Gastrocnemius medialis (tissue), 4 donors: ENCODE measurements at regions of chr15 and their contacts with region 1.

Region 1: DNA sequence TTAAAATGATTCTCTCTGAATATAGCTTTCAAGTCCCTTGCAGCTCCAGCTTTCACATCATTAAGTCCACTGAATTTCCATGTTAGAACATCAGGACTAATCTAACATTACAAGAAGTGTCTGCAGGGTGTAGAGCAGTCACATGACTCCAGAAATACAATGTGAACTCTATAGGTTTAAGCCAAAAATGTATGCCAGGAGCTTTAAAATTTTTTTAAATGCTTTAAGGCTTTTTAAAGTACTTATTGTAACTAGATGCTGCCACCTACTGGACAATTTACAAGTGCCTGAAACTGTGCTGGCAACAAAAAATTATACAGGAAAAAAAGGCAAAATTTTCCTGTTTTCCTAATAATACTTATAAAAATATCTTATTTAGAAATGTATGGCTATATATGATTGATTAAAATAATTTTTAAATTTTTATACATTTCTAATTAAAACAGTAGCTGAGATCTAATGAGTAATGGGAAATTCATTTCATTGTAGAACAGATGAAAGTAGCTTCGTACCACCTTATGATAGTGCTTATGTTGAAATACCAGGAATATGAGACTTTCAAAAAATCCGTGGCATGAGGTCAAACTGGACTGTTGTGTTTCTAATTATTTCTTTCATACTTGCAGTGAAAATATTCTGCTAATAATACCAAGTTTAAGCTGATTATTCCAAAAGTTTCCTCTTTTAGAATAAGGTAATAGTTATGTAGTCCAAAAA is 25.7 kb downstream of the FSIP1 start:
- DNase-seq: no peak
- ATAC-seq: no peak
- H3K4me3 ChIP-seq: no peak overlapping the region
- H3K27ac ChIP-seq: no peak overlapping the region
- H3K4me1 ChIP-seq: no peaks in the 10 kb centered on the region
- H3K27me3 ChIP-seq: no peaks in the 10 kb centered on the region
- CTCF ChIP-seq: peak; percentile 52 to 86 (median 55)
- POLR2A ChIP-seq: no peak

Region 2: DNA sequence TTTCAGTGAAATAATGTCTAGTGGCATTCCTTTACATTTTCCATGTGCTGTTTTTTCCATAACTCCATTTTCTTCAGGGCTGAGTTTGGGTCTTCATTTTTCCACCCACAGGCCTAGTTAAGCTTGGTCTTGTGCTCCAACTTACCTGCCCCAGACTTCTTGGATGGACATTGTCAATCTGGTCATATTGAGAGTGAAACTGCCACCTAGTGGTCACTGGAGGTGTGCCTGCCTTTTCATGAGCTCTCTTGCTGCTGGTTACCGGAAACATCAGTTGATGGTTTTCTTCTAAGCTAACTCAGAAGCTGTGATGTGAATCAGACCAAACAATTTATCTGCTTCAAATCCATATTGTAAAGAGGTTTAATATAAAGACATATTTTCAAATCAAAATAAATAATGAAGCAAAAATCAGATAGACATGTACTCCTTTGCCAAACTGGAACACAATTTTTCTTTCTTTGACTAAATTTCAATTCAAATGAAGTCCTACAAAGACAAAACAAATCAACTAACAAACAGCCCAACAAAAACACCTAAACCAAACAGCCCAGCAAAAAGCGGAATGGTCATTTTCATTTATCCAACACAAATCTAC is 1057.2 kb before region 1 on chr15:
- in situ Hi-C with region 1: loop called in 2 of 4 experiments (anchors 10 to 25 kb)
- intact Hi-C with region 1: no loop called
- DNase-seq: peak; percentile 6 to 17
- ATAC-seq: no peak
- H3K4me3 ChIP-seq: no peak overlapping the region
- H3K27ac ChIP-seq: no peak overlapping the region
- H3K4me1 ChIP-seq: no peaks in the 10 kb centered on the region
- H3K27me3 ChIP-seq: no peaks in the 10 kb centered on the region
- CTCF ChIP-seq: peak; percentile 40 to 73 (median 47)
- POLR2A ChIP-seq: no peak

Region 3: DNA sequence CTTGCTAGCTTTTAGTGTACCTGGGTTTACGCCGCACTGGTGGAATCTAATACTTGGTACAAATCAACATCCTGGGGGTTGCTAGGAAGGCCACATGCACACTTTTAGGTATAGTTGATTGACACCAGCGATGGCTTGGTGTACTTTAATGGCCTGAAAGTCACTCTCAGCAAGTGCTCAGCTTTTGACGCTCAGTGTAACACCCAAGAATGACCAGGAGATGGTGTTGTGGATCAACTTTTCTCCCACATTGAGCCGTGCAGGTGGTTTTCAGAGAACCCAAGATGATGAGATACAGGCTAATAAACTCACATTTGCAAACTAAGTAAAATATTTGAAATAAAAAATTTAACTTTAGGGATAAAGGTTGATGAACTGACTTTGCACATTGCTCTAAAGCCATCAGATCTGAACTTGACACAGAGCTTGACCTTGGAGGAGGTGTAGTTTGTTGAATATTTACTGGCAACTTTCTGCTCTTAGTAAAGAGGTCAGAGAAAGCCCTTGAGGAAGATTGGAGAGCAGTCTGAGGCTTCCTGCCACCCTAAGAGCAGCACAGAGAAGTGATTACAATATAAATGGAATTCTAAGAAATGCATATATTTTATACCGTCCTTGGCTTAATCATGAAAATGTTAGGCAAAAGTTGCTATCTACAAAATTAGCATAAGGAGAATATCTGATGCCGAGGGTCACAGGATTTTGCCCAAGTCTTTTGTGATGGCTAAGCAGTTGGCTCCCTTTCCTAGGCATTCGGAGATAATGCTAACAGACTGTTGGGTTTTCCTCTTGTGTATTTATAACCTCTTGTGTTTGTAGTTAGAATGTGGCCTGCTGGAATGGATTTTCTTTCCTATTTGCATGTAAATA is 1048.9 kb before region 1 on chr15:
- in situ Hi-C with region 1: loop called in 2 of 4 experiments (anchors 10 to 25 kb)
- intact Hi-C with region 1: loop called (anchors 5 kb)
- DNase-seq: no peak
- ATAC-seq: peak; percentile 63 to 65
- H3K4me3 ChIP-seq: no peak overlapping the region
- H3K27ac ChIP-seq: no peak overlapping the region
- H3K4me1 ChIP-seq: no peaks in the 10 kb centered on the region
- H3K27me3 ChIP-seq: peaks cover 0 to 7% (median 0%) of the 10 kb centered on the region in 3 donors
- CTCF ChIP-seq: peak in 4 of 5 experiments; percentile 33 to 57 (median 50)
- POLR2A ChIP-seq: no peak

Region 4: DNA sequence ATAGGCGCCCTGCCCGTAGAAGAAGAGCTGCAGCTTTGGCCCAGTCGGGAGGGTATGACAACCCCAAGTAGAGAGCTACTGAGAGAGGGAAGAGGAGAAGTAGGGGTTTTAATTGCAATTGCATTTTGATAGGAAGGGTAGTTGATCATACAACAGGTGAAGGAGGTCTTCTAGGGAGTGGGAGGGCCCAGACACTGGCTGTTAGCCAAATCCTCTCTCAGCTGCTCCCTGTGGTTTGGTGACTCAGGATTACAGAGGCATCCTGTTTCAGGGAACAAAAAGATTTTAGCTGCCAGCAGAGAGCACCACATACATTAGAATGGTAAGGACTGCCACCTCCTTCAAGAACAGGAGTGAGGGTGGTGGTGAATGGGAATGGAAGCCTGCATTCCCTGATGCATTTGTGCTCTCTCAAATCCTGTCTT is 585.0 kb before region 1 on chr15:
- in situ Hi-C with region 1: no loop called
- intact Hi-C with region 1: loop called (anchors 5 kb)
- DNase-seq: peak; percentile 6 to 52
- ATAC-seq: peak; percentile 71 to 81
- H3K4me3 ChIP-seq: no peak overlapping the region
- H3K27ac ChIP-seq: peak overlapping the region in 1 of 4 donors; percentile 40
- H3K4me1 ChIP-seq: no peaks in the 10 kb centered on the region
- H3K27me3 ChIP-seq: no peaks in the 10 kb centered on the region
- CTCF ChIP-seq: peak in 2 of 5 experiments; percentile 8 to 16
- POLR2A ChIP-seq: no peak

Region 5: GRCh38 chr15:39580117-39580484 is 176.9 kb before region 1 on chr15:
- in situ Hi-C with region 1: no loop called
- intact Hi-C with region 1: loop called (anchors 10 kb)
- DNase-seq: peak; percentile 56 to 82
- ATAC-seq: peak; percentile 84 to 87
- H3K4me3 ChIP-seq: peak overlapping the region; percentile 55 to 63 (median 58)
- H3K27ac ChIP-seq: peak overlapping the region; percentile 66 to 75 (median 68)
- H3K4me1 ChIP-seq: peaks cover 7 to 12% of the 10 kb centered on the region in 2 donors
- H3K27me3 ChIP-seq: peaks cover 0 to 6% (median 4%) of the 10 kb centered on the region in 3 donors
- CTCF ChIP-seq: peak; percentile 83 to 90 (median 86)
- POLR2A ChIP-seq: no peak

Region 6: DNA sequence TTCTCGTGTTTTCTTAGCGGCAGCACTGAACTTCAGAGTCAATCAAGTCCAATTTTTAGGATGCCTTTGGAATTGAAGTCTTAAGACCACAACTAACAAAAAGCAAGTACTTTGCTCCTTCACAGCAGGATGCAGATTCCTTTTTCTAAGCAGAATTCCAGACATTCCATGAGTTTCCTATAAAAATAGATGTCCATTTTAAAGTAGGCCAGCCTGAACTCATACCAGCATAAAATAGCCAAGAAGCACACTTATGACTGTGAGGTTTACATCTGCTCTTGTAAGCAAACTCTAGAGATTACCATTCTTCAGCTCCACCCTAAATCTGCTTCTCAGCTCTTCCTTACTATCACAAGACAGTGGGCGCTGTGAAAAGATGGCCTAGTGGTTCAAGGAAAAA is 90.3 kb before region 1 on chr15:
- in situ Hi-C with region 1: no loop called
- intact Hi-C with region 1: no loop called
- DNase-seq: no peak
- ATAC-seq: no peak
- H3K4me3 ChIP-seq: no peak overlapping the region
- H3K27ac ChIP-seq: no peak overlapping the region
- H3K4me1 ChIP-seq: no peaks in the 10 kb centered on the region
- H3K27me3 ChIP-seq: no peaks in the 10 kb centered on the region
- CTCF ChIP-seq: no peak
- POLR2A ChIP-seq: no peak

Region 7: GRCh38 chr15:39686000-39686613 is 70.9 kb before region 1 on chr15:
- in situ Hi-C with region 1: loop called in 3 of 4 experiments (anchors 5 to 10 kb)
- intact Hi-C with region 1: loop called (anchors 1 kb)
- DNase-seq: peak in 1 of 2 donors; percentile 9
- ATAC-seq: peak; percentile 65 to 66
- H3K4me3 ChIP-seq: no peak overlapping the region
- H3K27ac ChIP-seq: no peak overlapping the region
- H3K4me1 ChIP-seq: no peaks in the 10 kb centered on the region
- H3K27me3 ChIP-seq: no peaks in the 10 kb centered on the region
- CTCF ChIP-seq: peak; percentile 63 to 76 (median 67)
- POLR2A ChIP-seq: no peak